Posterior vena cava (tissue), 2 donors: ENCODE measurements at regions of chr16 and their contacts with region 1.

Region 1: DNA sequence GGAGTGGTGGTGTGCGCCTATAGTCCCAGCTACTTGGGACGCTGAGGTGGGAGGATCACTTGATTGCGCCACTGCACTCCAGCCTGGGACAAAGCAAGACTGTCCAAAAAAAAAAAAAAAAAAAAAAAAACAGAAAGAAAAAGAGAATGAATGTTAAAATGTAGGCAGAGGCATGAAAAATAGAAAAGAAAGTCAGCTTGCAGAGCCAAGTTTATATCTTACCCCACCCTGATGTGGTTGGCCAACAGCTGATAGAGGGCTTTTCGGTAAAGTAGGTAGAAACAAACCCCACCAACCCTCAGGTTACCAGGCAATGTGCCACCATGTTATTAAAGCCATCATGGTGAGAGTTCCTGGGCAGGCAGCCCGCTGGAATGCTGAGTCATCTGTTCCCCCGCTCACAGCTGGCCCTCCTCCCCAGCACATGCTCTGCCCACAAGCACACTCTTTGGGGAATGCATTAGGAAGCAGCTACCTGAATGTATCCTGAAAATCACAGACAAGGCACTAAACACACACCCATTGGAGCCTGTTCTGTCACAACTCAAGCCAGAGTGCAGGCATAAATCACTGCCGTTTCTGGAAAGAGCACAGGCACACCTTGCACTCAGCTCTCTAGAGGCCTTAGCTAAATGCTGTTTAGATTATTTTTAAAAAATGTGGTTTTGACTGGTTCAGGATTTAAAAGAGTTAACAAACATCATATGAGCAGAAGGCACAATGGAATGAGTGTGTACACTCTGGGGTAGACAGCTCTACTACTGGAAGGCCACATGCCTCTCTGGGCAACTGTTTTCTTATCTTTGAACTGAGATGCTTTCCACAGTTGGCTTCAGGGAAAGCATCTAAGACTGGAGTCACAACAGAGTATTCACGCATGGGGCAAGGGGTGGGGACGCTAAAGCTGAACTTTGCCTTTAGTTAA is 128.5 kb downstream of the PARN start:
- DNase-seq: peak; percentile 96

Region 2: DNA sequence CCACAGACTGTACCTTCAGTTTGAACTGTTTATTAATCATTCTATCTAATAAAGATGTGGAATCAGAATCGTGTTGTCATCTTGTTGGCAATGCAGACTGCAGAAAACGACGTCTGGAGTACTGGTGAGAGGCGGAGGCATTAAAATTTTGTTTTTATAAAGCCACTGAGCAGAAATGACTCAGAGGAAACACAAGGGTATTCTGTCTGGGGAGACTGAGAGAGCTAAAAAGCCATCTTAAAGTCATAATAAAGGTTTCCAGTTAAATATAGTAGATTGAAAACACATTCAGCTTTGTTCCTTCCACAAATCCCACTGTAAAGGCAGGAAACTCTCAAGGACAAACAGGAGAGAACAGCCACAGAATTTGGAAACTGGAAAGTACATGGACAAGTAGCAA is 1772.1 kb before region 1 on chr16:
- intact Hi-C with region 1: loop called in 1 of 2 experiments (anchors 10 kb)
- DNase-seq: no peak

Region 3: DNA sequence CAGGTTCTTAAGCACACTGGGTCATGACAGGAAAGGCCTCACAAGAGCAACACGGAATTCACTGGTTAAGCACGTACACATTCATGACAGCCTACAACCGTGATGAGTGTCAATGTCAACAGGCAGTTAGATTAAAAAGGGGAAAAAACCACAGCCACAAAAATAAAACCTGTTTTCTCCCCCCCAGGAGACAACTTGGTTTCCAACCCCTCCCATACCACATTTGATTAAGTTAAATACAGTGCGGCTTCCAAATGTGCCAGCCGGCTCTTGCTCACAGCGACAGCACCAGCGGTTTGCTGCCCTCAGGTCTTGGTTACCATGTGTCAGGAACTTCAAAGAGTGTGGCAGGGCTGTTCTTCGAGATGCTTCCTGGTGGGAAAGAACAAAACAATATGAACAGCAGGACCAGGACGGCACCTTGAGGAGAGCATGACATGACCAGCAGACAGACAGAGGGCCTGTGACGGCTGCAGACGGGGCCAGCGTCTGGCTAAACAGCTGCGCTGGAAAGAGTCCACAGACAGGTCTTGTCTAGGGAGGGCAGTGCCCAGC is 65.1 kb before region 1 on chr16:
- intact Hi-C with region 1: no loop called
- DNase-seq: no peak

Region 4: DNA sequence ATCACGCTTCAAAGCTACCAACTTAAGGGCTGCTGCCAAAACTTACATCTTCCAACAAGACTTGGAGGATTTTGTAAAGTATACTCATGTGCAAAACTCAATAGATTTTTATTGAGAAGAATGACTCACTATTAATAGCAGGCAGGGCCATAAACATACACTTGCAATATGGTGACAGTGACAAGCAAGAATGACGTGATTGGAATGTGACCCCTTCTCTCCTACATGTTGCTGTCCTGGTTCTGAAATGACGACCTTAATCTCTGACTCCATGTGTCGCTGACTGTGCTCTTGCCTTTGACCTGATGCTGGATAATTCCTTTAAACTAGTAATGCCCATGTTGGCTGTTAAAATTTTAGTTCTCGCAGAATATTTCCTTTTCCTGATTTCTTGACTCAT is 46.0 kb before region 1 on chr16:
- intact Hi-C with region 1: no loop called
- DNase-seq: no peak